ENCODE measurements at regions of chr7 and their contacts with region 1.

Region 1: DNA sequence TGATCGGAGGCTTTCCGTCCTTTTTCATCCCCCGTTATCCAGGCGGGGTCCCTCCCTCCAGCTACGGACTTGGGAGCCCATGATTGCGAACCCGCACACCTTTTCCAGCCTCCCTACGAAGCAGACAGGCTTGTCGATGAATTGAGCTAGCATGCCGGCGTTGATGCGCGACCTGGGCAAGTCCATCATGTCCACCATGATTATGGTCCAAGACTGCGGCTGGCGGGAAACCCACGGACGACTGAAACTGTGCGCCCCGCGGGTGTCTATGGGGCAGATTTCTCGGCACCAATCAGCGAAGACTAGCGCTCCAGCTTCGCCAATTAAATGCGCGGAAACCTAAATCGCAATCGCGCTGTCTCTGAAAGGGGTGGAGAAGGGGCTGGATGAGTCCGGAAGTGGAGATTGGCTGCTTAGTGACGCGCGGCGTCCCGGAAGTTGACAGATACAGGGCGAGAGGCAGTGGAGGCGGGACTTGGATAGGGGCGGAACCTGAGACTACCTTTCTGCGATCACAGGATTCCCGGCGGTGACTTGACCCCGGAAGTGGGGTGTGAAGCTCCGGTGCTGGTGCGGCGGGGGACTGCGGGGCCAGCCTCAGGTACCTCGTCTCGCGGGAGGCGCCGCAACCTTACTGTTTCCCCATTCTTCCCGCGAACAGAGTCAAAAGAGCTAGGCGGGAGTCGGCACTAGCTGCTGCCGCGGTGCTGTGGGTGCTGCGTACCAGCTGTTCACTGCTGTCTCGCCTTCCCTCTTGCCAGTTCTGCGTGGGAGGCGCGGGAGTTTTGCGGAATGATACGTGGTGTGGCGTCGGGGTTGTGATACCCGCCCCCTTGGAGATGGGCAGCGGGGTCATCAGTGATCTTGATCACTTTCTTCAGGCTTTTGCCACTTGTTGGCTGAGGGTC is at the start of gene UMAD1:
- DNase-seq: peak; percentile 98
- H3K4me3 Mint-ChIP-seq: peak within 1 kb of the TSS; percentile 96
- H3K27ac Mint-ChIP-seq: peak within 1 kb of the TSS; percentile 97
- H3K4me1 Mint-ChIP-seq: peaks cover 40% of the 10 kb centered on the region
- H3K27me3 Mint-ChIP-seq: no peaks in the 10 kb centered on the region
- total RNA-seq, gene UMAD1: 13.6 and 14.2 TPM in 2 replicates

Region 2: DNA sequence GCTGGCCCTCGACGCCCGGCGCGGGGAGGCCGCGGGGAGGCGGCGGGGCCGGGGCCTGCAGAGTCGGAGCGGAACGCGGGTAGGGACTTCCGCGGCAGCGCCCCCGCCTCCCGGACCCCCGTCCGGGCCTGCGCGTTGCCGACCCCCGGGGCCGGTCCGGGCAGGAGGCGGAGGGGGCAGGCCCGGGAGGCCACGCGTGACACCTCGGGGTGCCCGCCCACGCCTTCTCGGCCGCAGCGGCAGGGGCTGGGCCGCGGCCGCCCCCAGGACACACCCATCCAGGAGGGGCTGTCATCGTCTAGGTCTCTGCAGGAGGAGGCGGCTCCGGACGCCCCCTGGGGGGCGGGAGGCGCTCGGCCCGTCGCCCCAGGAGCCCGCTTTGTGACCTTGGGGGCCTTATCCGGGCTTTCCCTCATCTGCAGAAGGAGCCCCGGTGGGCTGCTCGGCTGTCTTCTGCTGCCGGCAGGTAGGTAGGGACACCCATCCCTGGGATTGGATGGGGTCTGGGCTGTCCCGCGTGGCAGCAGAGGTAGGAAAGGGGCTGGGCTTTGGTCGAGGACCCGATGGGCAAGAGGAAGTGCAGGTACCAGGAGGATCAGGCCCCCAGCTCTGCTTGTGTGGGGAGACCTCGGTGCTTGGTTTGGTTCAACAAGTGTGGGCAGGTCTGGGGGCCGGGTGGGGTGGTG is 1002.8 kb before region 1 on chr7:
- intact Hi-C with region 1: loop called (anchors 2 kb)
- DNase-seq: peak; percentile 48
- H3K4me3 Mint-ChIP-seq: peak overlapping the region; percentile 84
- H3K27ac Mint-ChIP-seq: peak overlapping the region; percentile 87
- H3K4me1 Mint-ChIP-seq: peaks cover 19% of the 10 kb centered on the region
- H3K27me3 Mint-ChIP-seq: no peaks in the 10 kb centered on the region

Region 3: DNA sequence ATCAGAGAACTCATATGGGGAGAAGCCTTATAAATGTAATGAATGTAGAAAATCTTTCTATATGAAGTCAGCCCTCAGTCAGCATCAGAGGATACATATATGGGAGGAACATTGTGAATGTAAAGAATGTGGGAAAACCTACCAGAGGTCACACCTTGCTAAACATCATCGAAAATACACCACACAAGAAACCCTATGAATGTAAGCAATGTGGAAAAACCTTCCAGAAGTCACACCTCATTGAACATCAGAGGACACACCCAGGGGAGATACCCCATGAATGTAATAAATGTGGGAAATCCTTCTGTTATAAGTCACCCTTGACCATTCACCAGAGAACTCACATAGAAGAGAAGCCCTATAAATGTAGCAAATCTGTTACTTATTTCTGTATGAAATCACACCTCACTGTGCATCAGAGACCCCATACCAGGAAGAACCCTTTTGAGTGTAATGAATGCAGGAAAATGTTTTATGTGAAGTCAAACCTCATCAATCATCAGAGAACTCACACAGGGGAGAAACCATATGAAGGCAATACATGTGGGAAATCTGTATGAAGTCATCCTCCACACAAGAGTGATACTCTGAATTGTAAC is 964.6 kb before region 1 on chr7:
- intact Hi-C with region 1: no loop called
- DNase-seq: no peak
- H3K4me3 Mint-ChIP-seq: no peak overlapping the region
- H3K27ac Mint-ChIP-seq: no peak overlapping the region
- H3K4me1 Mint-ChIP-seq: no peaks in the 10 kb centered on the region
- H3K27me3 Mint-ChIP-seq: no peaks in the 10 kb centered on the region

Region 4: DNA sequence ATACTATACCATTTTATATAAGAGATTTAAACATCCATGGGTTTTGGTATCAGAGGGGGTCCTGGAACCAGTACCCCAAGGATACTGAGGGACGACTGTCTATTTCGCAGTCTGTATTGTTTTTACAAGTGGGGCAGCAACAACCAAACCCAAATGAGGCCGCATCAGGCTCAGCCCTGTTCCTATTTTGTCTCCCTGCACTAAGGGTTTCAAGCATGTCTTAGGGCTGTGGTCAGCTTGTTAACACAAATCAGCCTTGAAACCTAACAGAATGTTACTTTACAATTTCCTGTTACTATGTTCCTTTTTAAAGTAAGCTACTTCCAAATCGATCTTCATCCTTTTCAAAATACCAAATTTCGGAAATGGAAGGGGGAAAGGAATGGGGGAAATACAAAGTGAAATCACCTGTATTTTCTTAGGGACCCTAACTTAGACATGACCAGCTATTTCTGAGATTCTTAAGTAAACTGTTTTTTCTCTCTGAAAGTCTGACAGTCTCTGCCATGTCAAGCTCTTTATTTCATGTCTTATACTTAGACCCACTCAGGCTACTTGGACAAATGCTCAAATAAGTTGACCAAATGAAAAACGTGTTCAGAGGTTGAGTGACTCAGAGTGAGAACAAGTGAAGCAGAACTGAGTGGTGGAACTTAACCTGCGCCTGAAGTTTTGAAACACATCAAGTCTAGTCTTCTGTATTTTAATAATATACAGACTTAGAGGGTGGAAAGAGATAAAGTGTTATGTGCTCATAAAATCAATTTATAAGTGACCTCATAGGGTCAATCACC is 382.4 kb before region 1 on chr7:
- intact Hi-C with region 1: loop called (anchors 1 kb)
- DNase-seq: no peak
- H3K4me3 Mint-ChIP-seq: peak overlapping the region; percentile 55
- H3K27ac Mint-ChIP-seq: peak overlapping the region; percentile 82
- H3K4me1 Mint-ChIP-seq: peaks cover 49% of the 10 kb centered on the region
- H3K27me3 Mint-ChIP-seq: no peaks in the 10 kb centered on the region

Region 5: DNA sequence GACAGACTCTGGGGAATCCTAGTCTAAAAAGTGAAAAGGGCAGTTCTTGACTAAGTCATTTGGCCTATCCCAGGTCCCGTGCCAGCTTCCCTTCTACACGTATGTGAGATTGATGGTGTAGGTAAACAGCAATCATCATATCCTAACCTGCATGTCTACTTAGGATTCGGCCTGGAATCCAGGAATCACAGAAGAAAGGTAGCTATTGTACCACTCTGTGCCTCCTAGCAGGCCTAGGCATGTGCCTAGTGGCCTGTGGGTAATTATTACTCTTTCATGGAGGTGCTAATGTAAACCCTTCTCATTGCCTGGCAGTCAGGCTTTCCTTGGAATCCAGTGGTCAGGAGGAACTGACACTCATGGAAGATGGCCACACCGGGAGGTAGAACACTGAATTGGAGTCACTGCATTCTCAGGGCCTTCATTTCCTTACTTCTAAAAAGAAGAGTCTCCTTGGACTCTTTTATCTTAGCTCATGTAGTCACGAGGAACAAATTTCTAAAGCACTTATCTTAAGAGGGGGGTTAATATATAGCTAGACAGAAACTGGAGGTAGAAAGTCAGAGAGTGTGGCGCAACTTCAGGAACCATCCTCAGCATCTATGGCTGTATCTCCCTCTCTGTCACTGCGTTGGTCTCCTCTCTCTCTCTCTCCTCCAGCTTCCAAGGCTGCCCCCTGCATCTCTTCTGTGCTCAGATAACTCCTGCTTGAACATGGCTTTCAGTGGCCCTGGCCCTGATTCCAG is 335.6 kb before region 1 on chr7:
- intact Hi-C with region 1: no loop called
- DNase-seq: no peak
- H3K4me3 Mint-ChIP-seq: no peak overlapping the region
- H3K27ac Mint-ChIP-seq: no peak overlapping the region
- H3K4me1 Mint-ChIP-seq: no peaks in the 10 kb centered on the region
- H3K27me3 Mint-ChIP-seq: peaks cover 2% of the 10 kb centered on the region

Region 6: DNA sequence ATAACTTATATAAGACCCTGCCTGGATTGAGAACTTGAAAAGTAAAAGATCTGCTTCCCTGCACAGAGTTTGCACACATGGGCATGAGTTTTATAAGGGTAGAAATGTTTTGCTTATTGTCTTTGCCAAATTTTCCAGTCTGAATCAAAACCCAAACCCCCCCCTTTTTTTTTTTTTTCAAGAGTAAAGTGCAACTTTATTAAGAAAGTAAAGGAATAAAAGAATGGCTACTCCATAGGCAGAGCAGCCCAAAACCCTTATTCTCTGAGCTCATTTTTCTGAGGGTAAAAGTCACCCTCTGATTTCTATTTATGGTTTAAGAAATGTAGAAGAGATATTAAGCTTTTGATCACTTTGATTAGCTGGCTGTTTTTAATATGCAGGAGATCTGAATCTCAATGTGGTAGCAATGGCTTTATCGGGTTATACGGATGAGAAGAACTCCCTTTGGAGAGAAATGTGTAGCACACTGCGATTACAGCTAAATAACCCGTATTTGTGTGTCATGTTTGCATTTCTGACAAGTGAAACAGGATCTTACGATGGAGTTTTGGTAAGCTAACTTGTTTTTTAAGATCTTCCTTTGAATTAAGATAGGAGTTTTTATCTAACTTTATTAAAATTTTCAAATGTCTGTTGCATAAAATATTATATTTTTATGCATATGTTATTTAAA is 55.1 kb before region 1 on chr7:
- intact Hi-C with region 1: no loop called
- DNase-seq: no peak
- H3K4me3 Mint-ChIP-seq: no peak overlapping the region
- H3K27ac Mint-ChIP-seq: no peak overlapping the region
- H3K4me1 Mint-ChIP-seq: no peaks in the 10 kb centered on the region
- H3K27me3 Mint-ChIP-seq: no peaks in the 10 kb centered on the region

Region 7: DNA sequence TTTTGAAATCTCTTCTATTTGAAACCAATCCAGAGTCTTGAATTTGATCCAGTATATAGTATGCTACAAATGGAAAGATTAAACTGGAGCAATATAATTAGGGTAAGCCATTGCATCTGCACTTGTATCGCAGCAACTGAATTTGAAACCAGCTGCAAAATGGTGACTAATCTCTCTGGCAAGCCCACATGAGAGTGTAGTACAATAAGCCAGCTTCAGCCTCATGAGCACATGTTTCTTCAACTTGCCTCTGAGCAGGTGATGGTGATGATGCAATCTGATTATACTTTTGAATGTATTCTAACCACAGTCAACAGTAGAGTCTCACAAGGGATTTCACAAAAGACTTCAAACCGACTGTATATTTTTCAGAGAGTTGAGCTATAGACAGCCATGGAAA is 78.8 kb after region 1 on chr7:
- intact Hi-C with region 1: loop called (anchors 5 kb)
- DNase-seq: peak; percentile 50
- H3K4me3 Mint-ChIP-seq: peak overlapping the region; percentile 56
- H3K27ac Mint-ChIP-seq: peak overlapping the region; percentile 80
- H3K4me1 Mint-ChIP-seq: peaks cover 27% of the 10 kb centered on the region
- H3K27me3 Mint-ChIP-seq: peaks cover 2% of the 10 kb centered on the region

Region 8: GRCh38 chr7:8125680-8126444 is 485.4 kb after region 1 on chr7:
- intact Hi-C with region 1: loop called (anchors 1 kb)
- DNase-seq: peak; percentile 69
- H3K4me3 Mint-ChIP-seq: peak overlapping the region; percentile 64
- H3K27ac Mint-ChIP-seq: peak overlapping the region; percentile 98
- H3K4me1 Mint-ChIP-seq: peaks cover 82% of the 10 kb centered on the region
- H3K27me3 Mint-ChIP-seq: peaks cover 5% of the 10 kb centered on the region

Region 9: DNA sequence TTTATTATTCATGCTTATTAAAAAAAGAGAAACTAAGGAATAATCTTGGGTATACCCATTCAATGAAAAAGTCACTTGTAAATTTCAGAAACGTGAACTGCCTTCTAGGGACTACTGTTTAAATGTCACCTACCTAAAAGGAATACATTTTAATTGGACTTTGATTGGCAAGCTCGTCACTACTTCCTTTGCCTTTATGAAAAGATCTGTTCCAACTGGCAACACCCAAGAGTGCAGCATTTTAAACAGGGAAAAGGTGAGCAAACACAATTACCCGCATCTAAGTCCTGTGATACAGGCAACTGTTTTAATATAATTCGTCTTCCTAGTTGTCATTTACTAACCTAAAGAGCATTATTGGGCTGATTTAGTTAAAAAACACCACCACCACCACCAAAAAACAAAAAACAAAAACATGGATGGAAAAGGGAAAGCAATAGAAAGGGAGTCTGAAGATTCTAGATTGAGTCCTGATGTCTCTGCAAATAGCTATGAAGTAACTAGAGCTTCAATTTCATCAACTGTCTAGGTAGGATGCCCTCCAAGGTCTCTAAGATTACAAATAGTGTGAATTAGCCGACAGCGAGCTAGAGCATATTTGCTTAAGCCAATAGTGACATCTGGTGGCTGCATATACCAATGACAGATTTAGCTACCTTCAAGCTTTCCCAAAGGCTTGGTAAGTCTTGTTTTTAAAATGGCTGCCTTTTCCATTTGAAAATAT is 655.3 kb after region 1 on chr7:
- intact Hi-C with region 1: loop called (anchors 1 kb)
- DNase-seq: peak; percentile 8
- H3K4me3 Mint-ChIP-seq: no peak overlapping the region
- H3K27ac Mint-ChIP-seq: no peak overlapping the region
- H3K4me1 Mint-ChIP-seq: peaks cover 4% of the 10 kb centered on the region
- H3K27me3 Mint-ChIP-seq: peaks cover 13% of the 10 kb centered on the region

Region 10: DNA sequence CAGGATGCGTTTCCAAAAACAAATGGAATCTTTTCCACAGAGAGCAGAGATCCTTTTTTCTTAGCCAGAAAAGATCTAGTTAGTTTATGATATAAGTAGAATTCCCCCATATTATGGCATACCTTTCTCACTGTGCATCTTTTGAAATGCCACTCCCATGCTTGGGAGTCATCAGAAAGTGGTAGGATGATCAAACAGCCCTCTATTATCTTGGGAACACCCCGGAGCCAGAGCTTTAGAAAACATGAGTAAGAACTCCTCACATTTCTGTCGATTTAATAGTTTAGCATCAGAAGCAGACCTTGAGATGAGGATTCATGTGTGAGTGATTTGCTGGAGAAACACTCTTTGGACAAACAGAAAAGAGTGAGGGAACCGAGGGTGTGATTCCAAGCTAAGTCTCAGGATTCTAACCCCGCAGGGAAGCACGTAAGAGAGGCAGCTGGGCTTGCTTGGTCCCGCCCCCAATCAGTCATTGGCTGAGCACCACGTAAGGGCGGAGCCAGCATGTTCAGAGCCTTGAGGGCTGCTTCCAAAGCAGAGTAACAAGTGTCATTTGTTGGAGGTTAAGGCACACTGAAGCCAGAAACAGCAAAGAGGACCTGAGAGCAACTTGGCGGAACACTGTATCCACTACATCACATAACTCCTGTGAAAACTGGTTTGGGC is 749.3 kb after region 1 on chr7:
- intact Hi-C with region 1: no loop called
- DNase-seq: no peak
- H3K4me3 Mint-ChIP-seq: no peak overlapping the region
- H3K27ac Mint-ChIP-seq: no peak overlapping the region
- H3K4me1 Mint-ChIP-seq: peaks cover 5% of the 10 kb centered on the region
- H3K27me3 Mint-ChIP-seq: no peaks in the 10 kb centered on the region